ENCODE measurements at regions of chr1 and their contacts with region 1.

Region 1: DNA sequence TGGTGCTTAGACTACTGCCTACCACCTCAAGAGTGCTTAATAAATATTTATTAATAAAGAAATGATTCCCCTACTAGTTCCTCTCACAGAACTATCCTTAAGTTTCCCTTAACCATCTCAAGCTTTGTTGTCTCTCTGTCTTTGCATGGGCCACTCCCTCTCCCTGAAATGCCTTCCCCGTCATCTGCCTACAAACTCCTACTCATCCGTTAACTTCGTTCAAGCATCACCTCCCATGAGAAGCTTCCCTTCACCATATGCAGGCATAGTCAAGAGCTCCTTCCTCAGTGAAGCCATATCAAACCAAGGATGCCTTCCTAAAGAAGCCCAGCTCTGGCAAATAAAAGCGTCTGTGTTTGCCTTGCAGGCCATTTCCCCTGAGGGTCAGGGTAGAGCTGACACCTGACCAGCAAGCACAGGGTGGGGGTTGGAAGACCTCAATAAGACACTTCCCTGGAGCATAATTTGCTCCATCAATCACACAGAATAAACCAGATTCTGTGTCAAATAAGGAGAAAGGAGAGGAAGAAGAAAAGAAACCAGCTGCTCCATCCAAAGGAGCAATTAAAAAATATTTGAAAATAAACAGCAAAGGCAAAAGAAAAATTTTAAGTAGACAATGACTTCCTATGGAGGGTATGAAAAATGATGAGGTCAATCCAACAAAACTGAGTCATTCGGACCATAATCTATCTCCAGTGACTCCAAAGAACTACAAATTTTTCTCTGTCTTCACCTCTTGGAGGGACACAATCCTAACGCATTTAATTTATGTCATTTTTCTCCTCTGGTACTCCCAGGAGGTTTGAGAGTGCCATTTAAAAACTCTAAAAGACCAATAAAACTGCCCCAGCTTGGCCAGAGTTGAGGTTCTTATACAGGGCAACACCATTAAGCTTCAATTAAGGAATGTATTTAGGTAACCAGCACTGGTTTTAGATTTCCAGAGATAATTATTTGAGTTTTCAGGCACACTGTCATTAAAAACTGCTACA is 303.6 kb downstream of the KCNH1 start:
- DNase-seq: no peak
- ATAC-seq: no peak
- H3K4me3 ChIP-seq: no peak overlapping the region
- H3K27ac ChIP-seq: no peak overlapping the region
- H3K4me1 ChIP-seq: no peaks in the 10 kb centered on the region
- H3K27me3 ChIP-seq: no peaks in the 10 kb centered on the region
- CTCF ChIP-seq: no peak
- EP300 ChIP-seq: no peak
- POLR2A ChIP-seq: no peak
- RAD21 ChIP-seq: no peak

Region 2: GRCh38 chr1:210132582-210132981 is 697.7 kb before region 1 on chr1:
- CTCF ChIA-PET with region 1: no interaction called
- POLR2A ChIA-PET with region 1: no interaction called
- in situ Hi-C with region 1: no loop called
- intact Hi-C with region 1: loop called (anchors 5 kb)
- DNase-seq: no peak
- ATAC-seq: no peak
- H3K4me3 ChIP-seq: no peak overlapping the region
- H3K27ac ChIP-seq: no peak overlapping the region
- H3K4me1 ChIP-seq: no peaks in the 10 kb centered on the region
- H3K27me3 ChIP-seq: no peaks in the 10 kb centered on the region
- CTCF ChIP-seq: no peak
- EP300 ChIP-seq: no peak
- POLR2A ChIP-seq: no peak
- RAD21 ChIP-seq: no peak

Region 3: GRCh38 chr1:210792245-210793102 is 37.9 kb before region 1 on chr1:
- CTCF ChIA-PET with region 1: no interaction called
- POLR2A ChIA-PET with region 1: no interaction called
- in situ Hi-C with region 1: no loop called
- intact Hi-C with region 1: no loop called
- DNase-seq: no peak
- ATAC-seq: no peak
- H3K4me3 ChIP-seq: no peak overlapping the region
- H3K27ac ChIP-seq: no peak overlapping the region
- H3K4me1 ChIP-seq: no peaks in the 10 kb centered on the region
- H3K27me3 ChIP-seq: no peaks in the 10 kb centered on the region
- CTCF ChIP-seq: no peak
- EP300 ChIP-seq: no peak
- POLR2A ChIP-seq: no peak
- RAD21 ChIP-seq: no peak